IMR-90 (cell line): ENCODE measurements at regions of chr11 and their contacts with region 1.

Region 1: GRCh38 chr11:57778318-57779037 is 16.9 kb downstream of the CTNND1 start:
- DNase-seq: peak; percentile 98
- ATAC-seq: peak; percentile 88
- H3K4me3 ChIP-seq: peak overlapping the region; percentile 21; the same call in 1 of the 2 replicates
- H3K27ac ChIP-seq: peak overlapping the region; percentile 88
- H3K4me1 ChIP-seq: peaks cover 31% of the 10 kb centered on the region
- H3K27me3 ChIP-seq: no peaks in the 10 kb centered on the region
- CTCF ChIP-seq: no peak
- POLR2A ChIP-seq: no peak; the same call in 1 of the 2 replicates
- RAD21 ChIP-seq: no peak

Region 2: GRCh38 chr11:57741132-57742086 is 37.1 kb before region 1 on chr11 and contains the start of gene SELENOH:
- CTCF ChIA-PET with region 1: no interaction called
- POLR2A ChIA-PET with region 1: no interaction called
- dilution Hi-C with region 1: no loop called
- in situ Hi-C with region 1: no loop called
- intact Hi-C with region 1: loop called (anchors 2 kb)
- DNase-seq: peak; percentile 98
- ATAC-seq: peak; percentile 97
- H3K4me3 ChIP-seq: peak within 1 kb of the TSS; percentile 63
- H3K27ac ChIP-seq: peak within 1 kb of the TSS; percentile 86
- H3K4me1 ChIP-seq: peaks cover 2% of the 10 kb centered on the region; the same call in 1 of the 2 replicates
- H3K27me3 ChIP-seq: no peaks in the 10 kb centered on the region
- CTCF ChIP-seq: no peak
- POLR2A ChIP-seq: peak; percentile 88
- RAD21 ChIP-seq: no peak; the same call in 1 of the 2 replicates
- total RNA-seq, gene SELENOH: 40.3 and 48.9 TPM in 2 replicates

Region 3: DNA sequence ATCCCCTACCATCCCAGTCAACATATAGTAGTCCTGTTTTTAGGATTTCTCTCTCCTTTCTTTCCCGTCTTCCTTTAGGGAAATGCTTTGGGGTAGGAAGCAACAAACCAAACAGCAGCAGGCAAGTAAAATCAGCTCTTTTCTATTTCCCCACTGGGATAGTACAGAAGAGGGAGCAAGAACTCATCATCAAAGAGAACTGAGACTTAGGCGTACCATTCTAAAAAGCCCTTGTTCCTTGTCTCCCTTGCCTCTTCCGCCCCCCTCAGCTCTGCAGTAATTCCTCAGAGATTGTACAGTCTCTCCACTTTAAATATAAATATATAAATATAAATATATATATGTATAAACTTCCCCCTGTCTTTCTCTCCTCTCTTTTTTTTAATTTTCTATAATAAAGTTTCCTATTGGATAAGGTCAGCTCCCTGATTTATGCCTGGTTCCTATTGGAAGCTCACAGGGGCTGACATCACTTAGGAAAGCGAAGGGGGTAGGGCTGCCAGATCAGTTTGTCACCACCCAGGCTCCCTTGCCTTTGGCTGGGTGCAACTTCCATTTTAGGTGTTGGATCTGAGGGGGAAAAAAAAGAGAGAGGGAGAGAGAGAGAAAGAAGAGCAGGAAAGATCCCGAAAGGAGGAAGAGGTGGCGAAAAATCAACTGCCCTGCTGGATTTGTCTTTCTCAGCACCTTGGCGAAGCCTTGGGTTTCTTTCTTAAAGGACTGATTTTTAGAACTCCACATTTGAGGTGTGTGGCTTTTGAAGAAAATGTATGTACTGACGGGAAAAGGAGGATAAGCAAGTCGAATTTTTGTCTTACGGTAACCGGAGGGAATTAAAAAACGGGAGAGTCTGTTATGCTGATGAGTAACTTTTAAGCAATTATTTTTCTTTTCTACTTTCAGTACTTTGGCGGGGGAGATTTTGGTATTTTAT is 16.9 kb before region 1 on chr11 and contains the start of gene CTNND1:
- CTCF ChIA-PET with region 1: interaction called, 5 read pairs
- POLR2A ChIA-PET with region 1: interaction called, 7 read pairs
- dilution Hi-C with region 1: no loop called
- in situ Hi-C with region 1: no loop called
- intact Hi-C with region 1: loop called (anchors 2 kb)
- DNase-seq: peak; percentile 98
- ATAC-seq: peak; percentile 96
- H3K4me3 ChIP-seq: peak within 1 kb of the TSS; percentile 99
- H3K27ac ChIP-seq: peak within 1 kb of the TSS; percentile 100
- H3K4me1 ChIP-seq: peaks cover 8% of the 10 kb centered on the region
- H3K27me3 ChIP-seq: no peaks in the 10 kb centered on the region
- CTCF ChIP-seq: no peak
- POLR2A ChIP-seq: peak; percentile 84; the same call in 1 of the 2 replicates
- RAD21 ChIP-seq: no peak
- total RNA-seq, gene CTNND1: 193 and 229 TPM in 2 replicates